ENCODE measurements at regions of chr4 and their contacts with region 1.

Region 1: GRCh38 chr4:140609548-140610425 is 41.0 kb upstream of the UCP1 start:
- DNase-seq: peak; percentile 66
- H3K4me3 Mint-ChIP-seq: no peak overlapping the region
- H3K27ac Mint-ChIP-seq: no peak overlapping the region
- H3K4me1 Mint-ChIP-seq: peaks cover 6% of the 10 kb centered on the region
- H3K27me3 Mint-ChIP-seq: no peaks in the 10 kb centered on the region
- CTCF ChIP-seq: peak; percentile 70

Region 2: DNA sequence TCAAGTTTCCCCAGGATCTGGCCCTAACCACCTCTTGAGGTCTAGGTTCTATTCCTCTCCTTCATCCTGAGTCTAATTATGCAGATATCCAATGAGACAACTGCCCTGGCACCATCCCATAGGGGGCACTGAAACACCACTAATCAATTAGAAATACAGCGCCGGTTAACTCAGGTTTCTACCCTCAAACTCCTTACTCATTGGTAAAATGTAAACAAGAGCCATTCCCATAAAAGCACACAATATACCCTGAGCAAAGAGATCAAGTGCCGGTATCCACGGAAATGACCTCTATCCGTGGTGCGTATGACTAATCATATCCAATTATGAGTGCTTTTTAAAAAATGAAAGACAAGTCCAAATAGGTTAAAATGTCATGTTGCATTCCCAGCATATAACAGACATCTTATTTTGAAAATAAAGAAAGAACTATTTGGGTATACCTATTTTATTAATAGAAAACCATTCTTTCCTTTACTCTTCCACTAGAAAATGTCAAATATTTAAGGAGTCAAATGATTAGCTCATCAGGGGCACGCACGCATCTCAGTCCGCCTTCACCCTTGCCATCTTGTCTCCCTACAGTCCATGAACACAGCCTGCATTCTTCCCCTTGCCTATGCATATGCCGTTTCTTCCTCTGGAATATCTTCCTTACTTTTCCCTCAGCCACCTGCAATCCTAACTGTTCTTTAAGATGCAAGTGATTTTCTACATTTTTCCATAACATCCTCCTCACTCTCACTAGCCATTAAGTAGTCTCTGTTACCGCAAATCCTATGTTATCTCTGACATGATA is 596.9 kb before region 1 on chr4:
- CTCF ChIA-PET with region 1: no interaction called
- POLR2A ChIA-PET with region 1: no interaction called
- intact Hi-C with region 1: loop called (anchors 5 kb)
- DNase-seq: peak; percentile 86
- H3K4me3 Mint-ChIP-seq: no peak overlapping the region
- H3K27ac Mint-ChIP-seq: peak overlapping the region; percentile 0
- H3K4me1 Mint-ChIP-seq: peaks cover 7% of the 10 kb centered on the region
- H3K27me3 Mint-ChIP-seq: no peaks in the 10 kb centered on the region
- CTCF ChIP-seq: peak; percentile 47

Region 3: DNA sequence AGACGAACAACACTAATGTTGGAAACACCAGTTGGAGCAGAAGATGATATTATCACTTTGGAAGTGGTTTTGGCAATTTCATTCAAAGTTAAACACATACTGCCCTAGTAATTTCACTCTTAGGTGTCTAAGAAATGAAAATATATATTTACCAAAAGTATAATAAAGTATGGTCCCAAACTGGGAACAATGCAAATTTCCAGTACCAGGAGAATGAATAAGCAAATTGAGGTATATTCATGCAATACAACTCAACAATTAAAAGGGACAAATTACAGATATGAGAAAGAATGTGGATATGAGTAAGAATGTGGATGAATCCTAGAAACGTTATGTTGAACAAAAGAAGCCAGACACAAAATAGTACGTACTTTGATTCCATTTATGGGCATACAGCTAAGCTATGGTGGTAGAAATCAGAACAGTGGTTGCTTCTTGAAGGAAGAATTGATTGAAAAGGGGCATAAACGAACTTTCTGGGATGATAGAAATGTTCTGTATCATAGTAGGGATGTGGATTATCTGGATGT is 75.8 kb before region 1 on chr4:
- CTCF ChIA-PET with region 1: no interaction called
- POLR2A ChIA-PET with region 1: no interaction called
- intact Hi-C with region 1: no loop called
- DNase-seq: no peak
- H3K4me3 Mint-ChIP-seq: no peak overlapping the region
- H3K27ac Mint-ChIP-seq: no peak overlapping the region
- H3K4me1 Mint-ChIP-seq: no peaks in the 10 kb centered on the region
- H3K27me3 Mint-ChIP-seq: no peaks in the 10 kb centered on the region
- CTCF ChIP-seq: no peak

Region 4: GRCh38 chr4:140568507-140569306 is 41.1 kb before region 1 on chr4 and contains the start of gene UCP1:
- CTCF ChIA-PET with region 1: no interaction called
- POLR2A ChIA-PET with region 1: no interaction called
- intact Hi-C with region 1: no loop called
- DNase-seq: peak; percentile 21
- H3K4me3 Mint-ChIP-seq: peak within 1 kb of the TSS; percentile 67
- H3K27ac Mint-ChIP-seq: no peak within 1 kb of the TSS
- H3K4me1 Mint-ChIP-seq: no peaks in the 10 kb centered on the region
- H3K27me3 Mint-ChIP-seq: no peaks in the 10 kb centered on the region
- CTCF ChIP-seq: no peak
- total RNA-seq, gene UCP1: not detected in 2 replicates

Region 5: DNA sequence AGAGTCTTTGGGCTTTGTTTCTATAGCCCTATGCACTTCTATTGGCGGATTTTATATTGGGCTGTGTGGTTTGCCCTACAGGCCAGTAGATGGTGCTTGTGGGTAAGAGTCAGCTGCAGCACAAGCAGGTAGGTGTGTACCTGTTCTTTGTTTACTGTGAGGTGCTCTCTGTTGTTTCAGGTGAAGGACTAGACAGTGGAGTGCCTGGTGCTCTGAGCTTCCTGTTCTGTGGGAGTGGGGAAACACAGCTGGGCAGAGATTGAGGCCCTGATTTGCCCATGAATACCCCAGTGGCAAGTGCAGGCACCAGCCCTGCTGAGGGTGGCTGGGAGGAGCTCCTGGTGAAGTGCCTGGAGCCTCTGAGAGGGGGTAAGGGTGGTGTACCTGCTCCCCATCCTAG is 14.7 kb before region 1 on chr4:
- CTCF ChIA-PET with region 1: interaction called, 39 read pairs
- POLR2A ChIA-PET with region 1: interaction called, 3 read pairs
- intact Hi-C with region 1: no loop called
- DNase-seq: peak; percentile 61
- H3K4me3 Mint-ChIP-seq: no peak overlapping the region
- H3K27ac Mint-ChIP-seq: no peak overlapping the region
- H3K4me1 Mint-ChIP-seq: no peaks in the 10 kb centered on the region
- H3K27me3 Mint-ChIP-seq: peaks cover 32% of the 10 kb centered on the region
- CTCF ChIP-seq: peak; percentile 70